ENCODE measurements at regions of chr2 and their contacts with region 1.

Region 1: GRCh38 chr2:240624950-240625621 is at the start of gene GPR35:
- H3K4me3 Mint-ChIP-seq: peak within 1 kb of the TSS; percentile 100
- H3K27ac Mint-ChIP-seq: peak within 1 kb of the TSS; percentile 96
- H3K4me1 Mint-ChIP-seq: peaks cover 92% of the 10 kb centered on the region
- H3K27me3 Mint-ChIP-seq: no peaks in the 10 kb centered on the region

Region 2: DNA sequence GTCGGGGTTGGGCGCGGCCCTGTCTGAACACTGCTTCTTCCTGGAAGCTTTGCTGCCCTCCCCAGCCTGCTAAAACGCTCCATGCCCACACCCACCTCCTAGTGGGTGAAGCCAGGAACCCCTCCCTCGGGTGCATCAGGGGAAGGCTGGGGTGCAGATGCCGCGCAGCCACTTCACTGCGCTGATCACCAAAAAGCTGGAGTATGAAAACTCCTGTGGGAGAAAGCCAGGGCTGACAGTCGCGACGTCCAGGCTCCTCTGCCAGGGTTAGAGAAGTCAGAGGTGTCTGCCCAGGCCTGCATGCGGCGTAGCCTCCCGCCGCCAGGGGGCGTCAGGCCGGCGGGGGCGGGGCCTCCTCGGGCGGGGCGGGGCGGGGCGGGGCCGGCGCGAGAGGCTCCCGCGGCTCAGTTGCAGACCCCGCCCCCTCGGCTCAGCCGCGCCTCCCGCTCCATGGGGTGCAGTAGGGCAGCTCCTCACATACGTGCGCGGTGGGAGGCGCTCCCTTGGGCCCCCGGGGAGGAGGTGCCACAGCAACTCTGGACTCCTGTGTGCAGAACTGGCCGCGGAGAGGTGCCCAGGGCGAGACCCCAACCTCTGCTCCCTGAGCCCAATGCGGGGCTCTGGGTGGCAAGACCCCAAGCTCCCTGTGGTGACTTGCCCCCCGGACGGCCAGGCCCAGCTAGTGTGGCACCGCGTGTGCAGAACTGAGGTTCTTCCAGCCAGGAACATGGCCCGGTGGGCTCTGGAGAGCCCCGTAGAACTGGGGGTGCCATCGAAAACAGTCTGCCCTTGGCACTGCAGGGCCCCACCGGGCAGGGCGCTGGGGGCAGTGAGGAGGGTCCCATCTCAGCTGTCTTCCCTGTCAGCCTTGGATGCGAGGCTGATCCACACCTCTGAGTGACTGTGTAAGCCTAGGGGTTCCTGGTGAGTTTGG is 58.6 kb before region 1 on chr2:
- intact Hi-C with region 1: loop called (anchors 5 kb)
- H3K4me3 Mint-ChIP-seq: peak overlapping the region; percentile 82
- H3K27ac Mint-ChIP-seq: peak overlapping the region; percentile 88
- H3K4me1 Mint-ChIP-seq: peaks cover 86% of the 10 kb centered on the region
- H3K27me3 Mint-ChIP-seq: no peaks in the 10 kb centered on the region

Region 3: DNA sequence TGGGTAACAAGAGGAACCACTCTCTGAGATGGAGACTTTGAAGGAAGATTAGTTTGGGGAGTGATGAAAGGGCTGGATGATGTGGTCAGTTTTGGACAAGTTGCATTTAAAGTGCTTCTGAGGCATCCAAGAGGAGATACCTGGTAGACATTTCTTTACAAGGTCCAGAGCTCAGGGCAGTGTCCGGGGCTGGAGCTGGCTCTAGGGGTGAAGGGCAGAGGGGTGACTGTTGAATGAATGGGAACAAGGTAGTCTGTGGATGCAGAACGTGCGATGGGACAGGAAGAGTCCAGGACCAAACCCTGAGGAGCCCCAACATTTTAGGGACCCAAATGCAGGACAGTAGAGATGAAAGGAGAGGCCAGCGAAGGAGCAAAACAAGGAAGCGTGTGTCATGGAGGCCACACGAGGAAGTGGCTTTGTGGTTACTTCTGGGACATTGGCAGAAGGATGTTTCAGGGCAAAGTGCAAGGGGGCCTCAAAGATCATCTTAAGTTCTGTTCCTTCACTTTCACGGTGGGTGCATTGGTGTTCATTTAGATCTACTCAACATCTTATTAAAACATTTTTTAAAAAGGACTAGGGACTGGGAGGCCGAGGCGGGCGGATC is 13.4 kb before region 1 on chr2:
- intact Hi-C with region 1: loop called (anchors 1 kb)
- H3K4me3 Mint-ChIP-seq: no peak overlapping the region
- H3K27ac Mint-ChIP-seq: no peak overlapping the region
- H3K4me1 Mint-ChIP-seq: peaks cover 7% of the 10 kb centered on the region
- H3K27me3 Mint-ChIP-seq: no peaks in the 10 kb centered on the region

Region 4: GRCh38 chr2:241268716-241269442 is 643.8 kb after region 1 on chr2:
- intact Hi-C with region 1: no loop called
- H3K4me3 Mint-ChIP-seq: no peak overlapping the region
- H3K27ac Mint-ChIP-seq: peak overlapping the region; percentile 6
- H3K4me1 Mint-ChIP-seq: peaks cover 45% of the 10 kb centered on the region
- H3K27me3 Mint-ChIP-seq: no peaks in the 10 kb centered on the region